Posterior vena cava (tissue), 2 donors: ENCODE measurements at regions of chr12 and their contacts with region 1.

Region 1: DNA sequence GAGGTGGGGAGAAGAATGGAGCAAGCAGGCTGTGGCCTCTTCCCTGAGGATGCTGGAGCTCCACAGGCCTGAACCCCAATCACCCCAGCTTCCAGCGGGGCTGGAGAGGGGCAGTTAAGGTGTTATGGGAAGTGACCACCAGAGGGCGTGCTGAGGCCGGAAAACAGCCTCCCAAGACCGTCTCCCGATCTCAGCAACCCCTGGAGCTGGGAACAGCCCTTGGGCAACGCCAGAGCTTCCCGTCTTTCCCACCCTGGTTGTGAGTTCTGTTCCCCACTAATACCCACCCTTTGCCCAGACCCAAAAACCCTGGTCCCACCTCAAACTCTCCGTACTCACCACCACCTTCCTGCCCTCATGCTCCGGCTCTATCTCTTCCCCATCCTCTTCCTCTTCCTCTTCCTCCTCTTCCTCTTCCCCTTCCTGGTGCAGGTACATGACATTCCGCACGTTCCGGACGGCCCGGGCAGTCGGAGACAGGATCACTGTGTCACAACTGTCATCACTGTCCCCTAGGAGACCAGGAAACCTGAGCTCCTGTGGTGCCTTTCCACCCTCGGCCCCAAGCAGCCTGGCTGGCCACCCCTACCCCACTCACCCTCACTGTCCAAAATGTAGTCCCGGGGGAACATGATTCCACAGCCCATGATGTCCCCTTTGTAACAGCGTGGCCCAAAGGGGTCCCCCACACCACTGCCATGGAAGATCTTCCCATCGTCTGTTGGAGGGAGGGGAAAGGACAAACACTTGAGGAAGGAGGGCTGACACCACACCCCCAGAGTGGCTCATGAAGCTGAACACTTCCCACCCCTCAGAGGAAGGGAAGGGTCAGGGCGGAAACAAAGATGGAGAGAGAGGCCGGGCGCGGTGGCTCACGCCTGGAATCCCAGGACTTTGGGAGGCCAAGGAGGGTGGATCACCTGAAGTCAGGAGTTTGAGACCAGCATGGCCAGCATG is 12.9 kb downstream of the SPRYD3 start:
- DNase-seq: peak; percentile 96

Region 2: GRCh38 chr12:53082637-53083175 is 16.5 kb after region 1 on chr12:
- intact Hi-C with region 1: no loop called
- DNase-seq: no peak

Region 3: DNA sequence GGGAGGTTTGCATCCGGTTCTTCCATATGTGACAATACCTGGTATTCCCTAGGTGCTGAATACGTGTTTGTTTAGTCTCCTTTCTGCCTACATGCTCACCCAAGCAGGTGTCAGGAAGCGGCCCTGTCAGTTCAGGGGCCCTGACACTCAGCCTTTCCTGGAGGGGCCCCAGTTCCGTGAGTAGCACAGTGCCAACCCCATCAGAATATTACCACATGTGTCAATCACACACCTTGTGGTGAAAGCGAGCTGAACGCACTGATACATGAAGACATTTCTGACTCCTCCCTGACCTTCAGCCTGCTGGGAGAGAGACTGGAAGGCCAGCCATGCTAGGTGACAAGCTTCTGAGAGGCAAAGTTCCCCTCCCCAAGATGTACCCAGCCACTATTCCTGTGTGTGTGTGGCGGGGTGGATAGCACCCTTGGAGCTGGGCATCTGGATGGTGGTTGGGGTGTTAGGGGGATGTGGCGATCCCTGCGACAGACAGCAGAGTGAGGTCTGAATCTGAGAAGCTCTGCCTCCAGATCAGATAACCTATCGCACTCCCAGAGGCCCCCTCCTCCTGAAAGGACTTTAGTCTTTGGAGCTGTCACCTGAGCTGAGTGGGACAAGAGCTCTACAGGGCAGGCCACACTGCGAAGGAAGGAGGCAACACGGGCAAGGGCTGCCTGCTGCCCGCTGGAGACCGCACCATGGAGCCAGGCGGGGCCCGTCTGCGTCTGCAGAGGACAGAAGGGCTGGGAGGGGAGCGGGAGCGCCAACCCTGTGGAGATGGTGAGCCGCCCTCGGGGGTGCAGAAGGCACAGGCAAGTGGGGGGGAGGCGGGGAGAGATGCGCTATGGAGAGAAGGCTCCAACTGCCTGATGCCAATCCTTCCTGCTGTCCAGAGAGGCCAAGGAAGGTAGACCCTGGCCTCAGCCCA is 36.9 kb after region 1 on chr12 and contains the start of gene SOAT2:
- intact Hi-C with region 1: loop called (anchors 5 kb)
- DNase-seq: no peak
- total RNA-seq, gene SOAT2: 0.32 to 0.90 TPM

Region 4: GRCh38 chr12:53198486-53199110 is 132.3 kb after region 1 on chr12:
- intact Hi-C with region 1: loop called (anchors 5 kb)
- DNase-seq: no peak